GM10248 (cell line): ENCODE measurements at regions of chr5 and their contacts with region 1.

Region 1: GRCh38 chr5:61200582-61201155 is 38.4 kb upstream of the SMIM15 start:
- DNase-seq: no peak
- CTCF ChIP-seq: no peak

Region 2: DNA sequence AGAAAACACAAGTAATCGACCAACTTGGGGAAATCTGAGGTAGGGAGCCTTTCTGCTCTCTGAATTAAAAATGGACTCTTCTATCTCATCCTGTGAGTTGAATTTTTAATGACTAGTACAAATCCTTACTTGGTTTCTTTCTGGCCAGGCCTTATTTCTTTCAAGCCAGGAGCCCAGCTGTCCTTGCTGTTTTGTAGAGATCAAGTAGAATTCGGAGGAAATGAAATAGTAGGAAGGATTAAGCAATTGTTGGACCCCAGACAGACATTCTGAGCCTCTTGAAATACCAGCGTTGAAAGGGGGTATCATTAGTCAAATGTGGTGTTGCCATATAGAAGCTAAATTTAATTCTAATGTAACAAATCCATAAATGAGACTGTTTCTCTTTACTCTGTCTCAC is 15.3 kb after region 1 on chr5:
- CTCF ChIA-PET with region 1: interaction called, 10 read pairs
- POLR2A ChIA-PET with region 1: no interaction called
- DNase-seq: no peak
- CTCF ChIP-seq: no peak

Region 3: GRCh38 chr5:61423487-61424145 is 222.9 kb after region 1 on chr5:
- CTCF ChIA-PET with region 1: no interaction called
- POLR2A ChIA-PET with region 1: no interaction called
- DNase-seq: no peak
- CTCF ChIP-seq: no peak